ENCODE measurements at regions of chr10 and their contacts with region 1.

Region 1: GRCh38 chr10:79149662-79150443 is 81.1 kb downstream of the ZMIZ1 start:
- DNase-seq: no peak
- ATAC-seq: peak; percentile 78
- H3K4me3 Mint-ChIP-seq: no peak overlapping the region
- H3K27ac Mint-ChIP-seq: no peak overlapping the region
- H3K4me1 Mint-ChIP-seq: peaks cover 54% of the 10 kb centered on the region
- H3K27me3 Mint-ChIP-seq: peaks cover 5% of the 10 kb centered on the region
- CTCF ChIP-seq: no peak

Region 2: DNA sequence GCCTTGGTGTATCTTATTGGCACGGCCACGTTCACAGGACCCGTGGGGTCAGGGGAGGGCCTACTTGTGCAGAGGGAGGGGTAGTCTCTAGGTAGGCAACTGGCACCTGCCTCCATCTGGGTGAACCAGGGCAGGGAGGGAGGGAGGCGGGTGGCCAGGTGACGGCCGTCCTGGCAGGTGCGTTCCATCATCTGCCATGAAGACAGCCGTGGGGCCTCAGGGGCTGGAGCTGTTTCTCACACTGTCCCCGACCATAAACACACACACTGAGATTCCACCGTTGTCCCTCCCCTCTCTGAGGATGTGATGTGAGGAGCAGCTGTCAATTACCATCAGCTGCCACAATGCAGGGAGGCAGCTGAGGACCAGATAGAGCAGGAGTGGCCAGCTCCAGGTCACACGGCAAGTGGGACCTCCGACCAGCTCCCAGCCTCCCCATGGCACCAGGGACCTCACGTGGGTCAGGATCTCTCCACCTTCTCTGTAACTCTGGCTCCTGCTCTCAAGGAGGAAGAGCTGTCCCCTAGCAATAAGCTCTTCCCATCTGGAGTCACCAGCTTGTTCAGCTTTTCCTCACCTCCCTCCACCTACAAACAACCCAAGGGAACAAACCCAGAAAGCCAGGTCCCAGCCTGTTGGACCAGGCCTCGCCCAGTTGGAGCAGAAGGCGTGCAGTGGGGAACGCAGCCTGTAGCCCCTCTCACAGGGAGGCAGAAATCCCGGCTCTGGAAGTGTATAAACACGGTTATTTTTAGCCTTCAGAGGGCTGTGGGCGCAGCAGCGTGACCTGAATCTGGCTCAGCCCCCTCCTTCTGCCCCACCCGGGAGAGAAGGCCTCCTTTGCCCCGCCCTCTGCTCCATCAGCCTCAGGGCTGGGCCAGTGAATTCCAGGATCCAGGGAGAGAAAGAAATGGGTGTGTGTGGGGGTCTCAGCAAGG is 48.0 kb before region 1 on chr10:
- CTCF ChIA-PET with region 1: no interaction called
- POLR2A ChIA-PET with region 1: no interaction called
- intact Hi-C with region 1: loop called (anchors 5 kb)
- DNase-seq: no peak
- ATAC-seq: no peak
- H3K4me3 Mint-ChIP-seq: no peak overlapping the region
- H3K27ac Mint-ChIP-seq: no peak overlapping the region
- H3K4me1 Mint-ChIP-seq: peaks cover 32% of the 10 kb centered on the region
- H3K27me3 Mint-ChIP-seq: peaks cover 31% of the 10 kb centered on the region
- CTCF ChIP-seq: no peak

Region 3: DNA sequence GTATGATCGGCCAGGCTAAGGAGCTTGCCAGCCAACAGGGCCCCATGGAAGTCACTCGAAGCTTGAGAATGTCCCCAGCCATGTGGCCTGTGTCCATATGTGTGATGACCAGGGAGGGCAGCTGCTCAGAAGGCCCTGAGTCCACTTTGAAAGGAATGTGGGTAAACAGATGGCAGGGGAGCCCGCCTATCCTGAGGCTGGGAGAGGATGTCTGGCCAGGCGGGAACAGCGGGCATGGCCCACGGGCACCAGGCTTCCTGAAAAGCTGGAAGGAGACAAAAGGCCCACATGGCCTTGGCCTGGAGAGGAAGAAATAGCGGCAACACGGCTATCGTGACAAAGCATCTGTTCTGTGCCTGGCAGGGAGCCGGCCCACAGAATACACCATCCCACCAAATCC is 59.5 kb after region 1 on chr10:
- CTCF ChIA-PET with region 1: no interaction called
- POLR2A ChIA-PET with region 1: no interaction called
- intact Hi-C with region 1: no loop called
- DNase-seq: no peak
- ATAC-seq: no peak
- H3K4me3 Mint-ChIP-seq: no peak overlapping the region
- H3K27ac Mint-ChIP-seq: no peak overlapping the region
- H3K4me1 Mint-ChIP-seq: no peaks in the 10 kb centered on the region
- H3K27me3 Mint-ChIP-seq: no peaks in the 10 kb centered on the region
- CTCF ChIP-seq: no peak

Measured in activated B cell treated with CpG ODN at 0.5 μM for 24 hours (primary cell).